B cell (primary cell): ENCODE measurements at regions of chr1 and their contacts with region 1.

Region 1: GRCh38 chr1:183915625-183916510 is 110.9 kb downstream of the RGL1 start:
- DNase-seq: peak; percentile 83
- ATAC-seq: peak; percentile 53
- H3K4me3 ChIP-seq: no peak overlapping the region
- H3K4me3 Mint-ChIP-seq: no peak overlapping the region
- H3K27ac ChIP-seq: no peak overlapping the region
- H3K27ac Mint-ChIP-seq: peak overlapping the region; percentile 22
- H3K4me1 ChIP-seq: peaks cover 20 to 24% of the 10 kb centered on the region in 2 donors
- H3K4me1 Mint-ChIP-seq: peaks cover 30% of the 10 kb centered on the region
- H3K27me3 ChIP-seq: peaks cover 0 to 3% (median 0%) of the 10 kb centered on the region in 4 experiments
- H3K27me3 Mint-ChIP-seq: no peaks in the 10 kb centered on the region
- CTCF ChIP-seq: peak; percentile 93

Region 2: GRCh38 chr1:182839209-182840065 is 1076.4 kb before region 1 on chr1 and contains the start of gene DHX9:
- CTCF ChIA-PET with region 1: no interaction called
- POLR2A ChIA-PET with region 1: no interaction called
- intact Hi-C with region 1: loop called (anchors 5 kb)
- DNase-seq: peak; percentile 97
- ATAC-seq: peak; percentile 80
- H3K4me3 ChIP-seq: peak within 1 kb of the TSS; percentile 85 to 92 (median 92)
- H3K4me3 Mint-ChIP-seq: peak within 1 kb of the TSS; percentile 92
- H3K27ac ChIP-seq: peak within 1 kb of the TSS; percentile 81 to 85
- H3K27ac Mint-ChIP-seq: peak within 1 kb of the TSS; percentile 97
- H3K4me1 ChIP-seq: peaks cover 22 to 28% of the 10 kb centered on the region in 2 donors
- H3K4me1 Mint-ChIP-seq: peaks cover 35% of the 10 kb centered on the region
- H3K27me3 ChIP-seq: no peaks in the 10 kb centered on the region
- H3K27me3 Mint-ChIP-seq: no peaks in the 10 kb centered on the region
- CTCF ChIP-seq: peak; percentile 43
- total RNA-seq, gene DHX9: 207 and 213 TPM in 2 replicates

Region 3: DNA sequence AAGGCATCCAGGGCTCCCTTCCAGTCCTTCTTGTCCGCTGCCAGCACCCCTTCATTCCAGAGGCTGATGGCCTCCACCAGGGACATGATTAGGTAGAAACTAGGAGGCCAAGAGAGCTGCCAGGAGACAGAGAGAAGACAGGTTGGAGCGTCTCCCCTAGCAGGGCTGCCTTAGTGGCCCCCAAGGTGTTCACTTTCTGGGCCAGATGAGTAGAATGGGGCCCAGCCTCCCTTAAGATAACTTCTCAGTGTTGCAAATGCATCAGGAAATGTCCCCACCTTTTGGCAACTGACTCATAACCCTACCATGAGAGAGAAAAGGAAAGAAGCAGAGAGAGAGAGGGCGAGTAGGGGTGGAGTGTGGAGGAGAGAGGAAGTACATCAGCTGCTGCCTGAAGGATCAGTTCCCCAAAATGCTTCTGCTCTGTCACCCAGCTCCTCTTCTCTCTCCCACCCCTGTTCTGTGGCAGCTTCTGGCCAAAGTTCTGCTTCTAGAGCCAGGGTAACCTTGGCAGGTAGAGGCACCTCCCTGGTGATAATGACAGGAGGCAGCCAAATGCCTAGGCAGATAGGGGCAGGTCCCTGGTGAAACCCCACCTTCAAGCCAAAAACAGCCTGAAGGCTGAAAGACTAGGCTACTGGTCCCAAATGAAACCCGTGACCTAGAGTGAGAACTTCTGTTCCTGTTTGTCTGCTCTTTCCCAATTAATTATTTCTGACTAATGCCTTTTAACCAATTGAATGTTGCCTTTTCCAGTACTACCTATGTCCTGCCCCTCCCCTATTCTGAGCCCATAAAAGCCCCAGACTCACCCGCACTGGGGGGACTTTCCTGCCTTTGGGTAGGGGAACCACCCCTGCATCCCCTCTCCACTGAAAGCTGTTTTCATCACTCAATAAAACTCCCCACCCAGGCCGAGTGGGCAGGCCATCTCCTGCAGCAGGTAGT is 325.4 kb before region 1 on chr1 and contains the start of gene NCF2:
- CTCF ChIA-PET with region 1: interaction called, 4 read pairs
- POLR2A ChIA-PET with region 1: no interaction called
- intact Hi-C with region 1: loop called (anchors 5 kb)
- DNase-seq: peak; percentile 91
- ATAC-seq: peak; percentile 84
- H3K4me3 ChIP-seq: peak within 1 kb of the TSS; percentile 20 to 81 (median 42)
- H3K4me3 Mint-ChIP-seq: peak within 1 kb of the TSS; percentile 37
- H3K27ac ChIP-seq: peak within 1 kb of the TSS; percentile 91 to 93
- H3K27ac Mint-ChIP-seq: peak within 1 kb of the TSS; percentile 95
- H3K4me1 ChIP-seq: peaks cover 61 to 64% of the 10 kb centered on the region in 2 donors
- H3K4me1 Mint-ChIP-seq: peaks cover 60% of the 10 kb centered on the region
- H3K27me3 ChIP-seq: no peaks in the 10 kb centered on the region
- H3K27me3 Mint-ChIP-seq: no peaks in the 10 kb centered on the region
- CTCF ChIP-seq: no peak
- total RNA-seq, gene NCF2: 10.5 and 10.7 TPM in 2 replicates

Region 4: DNA sequence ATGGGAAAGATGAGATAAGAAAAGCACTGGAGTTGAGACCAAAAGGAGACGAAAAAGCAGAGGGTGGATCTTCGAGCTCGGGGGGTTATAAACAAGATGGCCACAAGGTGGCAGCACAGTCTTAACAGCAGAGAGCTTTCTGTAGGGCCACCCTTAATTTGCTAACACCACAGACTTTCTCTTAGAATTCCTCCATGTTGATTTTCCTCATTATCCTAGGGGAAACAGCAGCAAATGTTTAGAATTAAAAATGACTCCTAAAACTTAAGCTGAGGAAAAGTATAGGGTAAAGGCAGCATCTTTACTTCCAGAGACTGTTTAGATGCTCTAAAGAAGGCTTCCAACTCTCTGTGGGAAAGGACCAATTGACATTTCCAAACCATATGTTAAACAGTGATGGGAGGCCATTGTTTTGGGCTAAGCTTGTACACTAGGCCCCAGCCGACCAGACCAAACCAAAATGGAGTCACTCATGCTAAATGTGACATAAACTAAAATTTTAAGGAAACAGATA is 260.2 kb before region 1 on chr1:
- CTCF ChIA-PET with region 1: interaction called, 377 read pairs
- POLR2A ChIA-PET with region 1: interaction called, 3 read pairs
- intact Hi-C with region 1: loop called (anchors 1 kb)
- DNase-seq: peak; percentile 80
- ATAC-seq: peak; percentile 84
- H3K4me3 ChIP-seq: no peak overlapping the region
- H3K4me3 Mint-ChIP-seq: no peak overlapping the region
- H3K27ac ChIP-seq: no peak overlapping the region
- H3K27ac Mint-ChIP-seq: no peak overlapping the region
- H3K4me1 ChIP-seq: no peaks in the 10 kb centered on the region
- H3K4me1 Mint-ChIP-seq: no peaks in the 10 kb centered on the region
- H3K27me3 ChIP-seq: no peaks in the 10 kb centered on the region
- H3K27me3 Mint-ChIP-seq: peaks cover 5% of the 10 kb centered on the region
- CTCF ChIP-seq: peak; percentile 94

Region 5: DNA sequence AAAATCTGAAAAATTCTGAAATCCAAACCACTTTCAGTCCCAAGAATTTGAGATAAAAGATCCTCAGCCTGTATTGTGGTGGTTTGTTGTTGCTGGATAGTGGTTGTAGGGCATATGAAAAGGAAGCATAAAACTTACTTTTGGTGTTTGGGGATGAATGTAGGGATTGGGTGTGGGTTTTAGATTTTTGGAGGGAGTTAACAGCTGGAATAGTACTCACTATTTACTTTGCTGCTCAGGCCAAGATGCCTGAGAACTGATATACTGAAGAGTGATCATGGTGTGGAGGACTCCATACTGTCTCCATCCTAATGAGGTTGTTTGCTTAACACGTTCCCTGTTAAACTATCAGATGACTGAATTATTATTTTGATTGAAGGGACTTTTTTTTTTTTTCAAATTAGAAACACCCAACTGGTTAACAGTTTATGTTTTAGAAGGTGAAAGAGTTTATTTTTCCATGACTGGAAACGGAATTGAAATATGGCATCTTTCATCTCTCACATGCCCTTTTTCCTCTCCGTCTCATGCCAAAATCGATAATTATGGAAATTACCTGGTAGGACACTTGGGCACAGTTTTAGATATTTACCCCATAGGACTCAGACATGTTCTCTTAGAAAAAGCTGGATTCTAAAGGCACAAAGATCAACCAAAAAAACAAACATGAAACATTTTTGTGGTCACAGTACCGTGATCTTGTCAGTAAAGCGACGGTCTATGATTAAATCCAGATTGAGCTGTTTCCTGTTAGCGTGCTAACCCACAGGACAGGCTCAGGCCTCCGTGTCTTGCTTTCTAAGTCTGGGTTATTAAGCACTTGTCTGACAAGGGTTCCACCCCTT is 73.7 kb before region 1 on chr1:
- CTCF ChIA-PET with region 1: interaction called, 7 read pairs
- POLR2A ChIA-PET with region 1: no interaction called
- intact Hi-C with region 1: loop called (anchors 10 kb)
- DNase-seq: peak; percentile 17
- ATAC-seq: peak; percentile 58
- H3K4me3 ChIP-seq: peak overlapping the region in 1 of 5 experiments; percentile 42
- H3K4me3 Mint-ChIP-seq: peak overlapping the region; percentile 53
- H3K27ac ChIP-seq: no peak overlapping the region
- H3K27ac Mint-ChIP-seq: no peak overlapping the region
- H3K4me1 ChIP-seq: peaks cover 0 to 13% of the 10 kb centered on the region in 2 donors
- H3K4me1 Mint-ChIP-seq: peaks cover 12% of the 10 kb centered on the region
- H3K27me3 ChIP-seq: no peaks in the 10 kb centered on the region
- H3K27me3 Mint-ChIP-seq: no peaks in the 10 kb centered on the region
- CTCF ChIP-seq: no peak

Region 6: GRCh38 chr1:183926983-183927382 is 11.1 kb after region 1 on chr1:
- CTCF ChIA-PET with region 1: interaction called, 20 read pairs
- POLR2A ChIA-PET with region 1: no interaction called
- intact Hi-C with region 1: no loop called
- DNase-seq: no peak
- ATAC-seq: no peak
- H3K4me3 ChIP-seq: no peak overlapping the region
- H3K4me3 Mint-ChIP-seq: no peak overlapping the region
- H3K27ac ChIP-seq: no peak overlapping the region
- H3K27ac Mint-ChIP-seq: no peak overlapping the region
- H3K4me1 ChIP-seq: no peaks in the 10 kb centered on the region
- H3K4me1 Mint-ChIP-seq: no peaks in the 10 kb centered on the region
- H3K27me3 ChIP-seq: no peaks in the 10 kb centered on the region
- H3K27me3 Mint-ChIP-seq: peaks cover 11% of the 10 kb centered on the region
- CTCF ChIP-seq: no peak

Region 7: GRCh38 chr1:184025242-184025675 is 109.4 kb after region 1 on chr1:
- CTCF ChIA-PET with region 1: no interaction called
- POLR2A ChIA-PET with region 1: no interaction called
- intact Hi-C with region 1: no loop called
- DNase-seq: no peak
- ATAC-seq: no peak
- H3K4me3 ChIP-seq: no peak overlapping the region
- H3K4me3 Mint-ChIP-seq: no peak overlapping the region
- H3K27ac ChIP-seq: no peak overlapping the region
- H3K27ac Mint-ChIP-seq: no peak overlapping the region
- H3K4me1 ChIP-seq: no peaks in the 10 kb centered on the region
- H3K4me1 Mint-ChIP-seq: no peaks in the 10 kb centered on the region
- H3K27me3 ChIP-seq: peaks cover 0 to 8% (median 4%) of the 10 kb centered on the region in 4 experiments
- H3K27me3 Mint-ChIP-seq: peaks cover 19% of the 10 kb centered on the region
- CTCF ChIP-seq: no peak

Region 8: DNA sequence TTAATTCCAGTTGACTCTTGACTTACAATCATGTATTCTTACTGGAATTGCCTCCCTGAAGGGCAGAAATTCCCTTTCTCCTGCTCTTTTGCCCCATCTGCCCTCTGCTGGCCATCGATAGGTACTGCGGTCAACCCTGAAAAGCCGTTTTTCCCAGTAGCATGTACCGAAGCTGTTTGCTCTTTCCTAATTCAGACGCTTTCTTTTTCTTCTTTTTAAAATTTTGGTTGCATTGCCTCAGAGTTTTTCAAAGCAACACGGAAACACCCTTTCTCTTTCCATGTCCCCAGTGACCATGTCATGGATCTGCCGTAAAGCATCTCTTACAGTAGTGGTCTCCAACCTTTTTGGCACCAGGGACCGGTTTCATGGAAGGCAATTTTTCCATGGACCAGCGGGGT is 306.8 kb after region 1 on chr1:
- CTCF ChIA-PET with region 1: interaction called, 9 read pairs
- POLR2A ChIA-PET with region 1: no interaction called
- intact Hi-C with region 1: loop called (anchors 5 kb)
- DNase-seq: peak; percentile 40
- ATAC-seq: no peak
- H3K4me3 ChIP-seq: no peak overlapping the region
- H3K4me3 Mint-ChIP-seq: no peak overlapping the region
- H3K27ac ChIP-seq: no peak overlapping the region
- H3K27ac Mint-ChIP-seq: no peak overlapping the region
- H3K4me1 ChIP-seq: no peaks in the 10 kb centered on the region
- H3K4me1 Mint-ChIP-seq: no peaks in the 10 kb centered on the region
- H3K27me3 ChIP-seq: no peaks in the 10 kb centered on the region
- H3K27me3 Mint-ChIP-seq: peaks cover 9% of the 10 kb centered on the region
- CTCF ChIP-seq: peak; percentile 81